HEK293T (cell line): ENCODE measurements at regions of chr6 and their contacts with region 1.

Region 1: GRCh38 chr6:28104392-28105244 is 19.8 kb upstream of the ZSCAN16 start:
- DNase-seq: peak; percentile 84

Region 2: GRCh38 chr6:28090917-28091586 is 13.6 kb before region 1 on chr6:
- CTCF ChIA-PET with region 1: no interaction called
- POLR2A ChIA-PET with region 1: interaction called, 24 read pairs
- DNase-seq: no peak